PC-3 (cell line): ENCODE measurements at regions of chr5 and their contacts with region 1.

Region 1: DNA sequence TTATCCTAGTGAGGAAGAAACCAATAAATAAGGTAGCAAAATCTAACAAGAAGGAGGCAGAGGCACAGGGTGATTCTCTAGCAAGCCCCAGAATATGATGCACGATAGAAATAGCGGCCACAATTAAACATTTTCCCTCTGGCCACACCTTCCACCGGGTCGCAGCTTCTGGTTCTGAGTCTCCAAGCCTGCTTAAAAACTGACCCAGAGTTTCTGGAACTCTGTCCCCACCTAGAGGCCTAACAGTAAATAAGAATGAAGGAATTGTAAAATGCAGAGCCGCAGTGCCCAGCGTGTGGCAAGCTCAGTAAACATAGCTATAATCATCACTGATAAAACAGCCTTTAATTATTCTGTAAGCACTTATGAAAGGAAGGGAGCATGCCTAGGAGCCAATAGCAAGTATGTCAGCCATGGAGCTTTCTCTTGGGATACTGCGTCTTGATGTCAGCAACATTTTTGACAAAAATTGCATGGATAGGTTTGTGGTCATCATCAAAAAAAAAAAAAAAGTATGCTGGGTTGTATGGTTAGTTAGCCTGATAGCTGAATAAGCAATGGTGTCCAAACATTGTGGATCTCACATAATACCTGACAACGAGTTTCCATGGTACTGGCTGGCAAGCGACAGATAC is 465.5 kb downstream of the DNAH5 start:
- DNase-seq: peak; percentile 83
- ATAC-seq: peak; percentile 57
- H3K4me3 ChIP-seq: no peak overlapping the region; the same call in 1 of the 2 replicates
- H3K27ac ChIP-seq: no peak overlapping the region
- H3K4me1 ChIP-seq: peaks cover 49% of the 10 kb centered on the region
- H3K27me3 ChIP-seq: no peaks in the 10 kb centered on the region
- CTCF ChIP-seq: peak; percentile 94

Region 2: GRCh38 chr5:12292610-12293204 is 1186.2 kb before region 1 on chr5:
- CTCF ChIA-PET with region 1: no interaction called
- POLR2A ChIA-PET with region 1: no interaction called
- intact Hi-C with region 1: loop called (anchors 1 kb)
- DNase-seq: peak; percentile 88
- ATAC-seq: peak; percentile 72
- H3K4me3 ChIP-seq: no peak overlapping the region
- H3K27ac ChIP-seq: no peak overlapping the region
- H3K4me1 ChIP-seq: no peaks in the 10 kb centered on the region
- H3K27me3 ChIP-seq: no peaks in the 10 kb centered on the region
- CTCF ChIP-seq: peak; percentile 90

Region 3: DNA sequence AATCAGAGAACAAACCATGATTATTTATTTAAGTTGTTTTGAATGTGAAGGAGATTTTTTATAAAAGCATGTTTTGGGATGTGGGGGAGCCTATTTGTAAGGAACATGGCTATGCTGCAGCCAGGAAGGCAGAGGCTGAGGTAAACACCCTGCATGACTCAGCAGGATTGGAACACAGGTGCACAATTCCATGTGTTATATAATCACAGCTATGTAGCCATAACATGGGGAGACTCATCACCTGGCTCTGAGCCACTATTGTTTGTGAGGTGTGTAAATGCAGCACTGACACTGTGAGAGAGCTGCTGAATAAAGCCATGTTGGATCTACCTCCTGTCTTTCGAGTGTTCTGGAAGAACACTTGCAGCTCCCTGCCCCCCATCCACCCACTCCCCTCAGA is 544.2 kb before region 1 on chr5:
- CTCF ChIA-PET with region 1: no interaction called
- POLR2A ChIA-PET with region 1: no interaction called
- intact Hi-C with region 1: loop called (anchors 5 kb)
- DNase-seq: peak; percentile 96
- ATAC-seq: peak; percentile 87
- H3K4me3 ChIP-seq: no peak overlapping the region
- H3K27ac ChIP-seq: no peak overlapping the region
- H3K4me1 ChIP-seq: peaks cover 14% of the 10 kb centered on the region
- H3K27me3 ChIP-seq: no peaks in the 10 kb centered on the region
- CTCF ChIP-seq: no peak

Region 4: DNA sequence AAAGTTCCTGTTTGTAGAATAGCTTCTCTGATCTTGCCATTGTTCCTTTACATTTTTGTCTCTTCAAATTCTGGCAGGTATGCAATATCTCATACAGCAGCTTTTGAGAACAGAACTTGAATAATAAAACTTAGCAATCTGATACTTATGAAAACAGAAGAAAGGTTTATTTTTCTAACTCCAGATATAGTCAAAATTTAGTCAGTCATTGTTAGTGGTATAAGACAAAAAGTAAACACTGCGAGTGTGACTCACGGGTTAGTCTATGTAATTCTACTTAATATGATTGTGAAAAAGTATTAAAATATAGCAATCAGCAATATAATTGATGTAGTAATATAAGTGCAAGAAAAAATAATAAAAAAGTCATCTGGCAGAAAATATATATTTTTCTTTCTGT is 444.9 kb before region 1 on chr5:
- CTCF ChIA-PET with region 1: no interaction called
- POLR2A ChIA-PET with region 1: no interaction called
- intact Hi-C with region 1: loop called (anchors 2 kb)
- DNase-seq: peak; percentile 81
- ATAC-seq: peak; percentile 98
- H3K4me3 ChIP-seq: no peak overlapping the region
- H3K27ac ChIP-seq: 0 out of 2 replicates have a peak overlapping the region, but pooled peaks have one; percentile 5
- H3K4me1 ChIP-seq: peaks cover 5% of the 10 kb centered on the region
- H3K27me3 ChIP-seq: no peaks in the 10 kb centered on the region
- CTCF ChIP-seq: no peak

Region 5: DNA sequence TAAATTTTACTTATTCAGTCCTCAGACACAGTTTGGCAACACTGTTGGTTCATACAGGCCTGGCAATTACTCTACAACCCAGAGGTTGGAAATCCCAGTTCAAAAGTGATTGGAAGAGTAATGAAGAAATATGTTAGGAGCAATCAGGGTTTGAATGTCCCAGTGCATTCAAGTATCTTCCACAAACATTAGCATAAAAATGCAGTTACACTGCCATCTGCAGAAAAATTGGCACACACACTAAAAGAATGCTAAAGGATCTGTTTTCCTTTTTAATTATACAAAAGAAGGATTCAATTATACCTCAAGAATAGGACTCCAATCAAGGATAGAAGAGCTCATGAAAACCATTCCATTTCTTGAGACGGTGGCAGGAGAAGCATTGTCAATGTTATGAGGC is 335.4 kb after region 1 on chr5:
- CTCF ChIA-PET with region 1: no interaction called
- POLR2A ChIA-PET with region 1: no interaction called
- intact Hi-C with region 1: loop called (anchors 1 kb)
- DNase-seq: peak; percentile 75
- ATAC-seq: peak; percentile 70
- H3K4me3 ChIP-seq: no peak overlapping the region
- H3K27ac ChIP-seq: no peak overlapping the region
- H3K4me1 ChIP-seq: peaks cover 7% of the 10 kb centered on the region; the same call in 1 of the 2 replicates
- H3K27me3 ChIP-seq: no peaks in the 10 kb centered on the region
- CTCF ChIP-seq: peak; percentile 78